Endothelial cell of umbilical vein (primary cell): ENCODE measurements at regions of chr22 and their contacts with region 1.

Region 1: DNA sequence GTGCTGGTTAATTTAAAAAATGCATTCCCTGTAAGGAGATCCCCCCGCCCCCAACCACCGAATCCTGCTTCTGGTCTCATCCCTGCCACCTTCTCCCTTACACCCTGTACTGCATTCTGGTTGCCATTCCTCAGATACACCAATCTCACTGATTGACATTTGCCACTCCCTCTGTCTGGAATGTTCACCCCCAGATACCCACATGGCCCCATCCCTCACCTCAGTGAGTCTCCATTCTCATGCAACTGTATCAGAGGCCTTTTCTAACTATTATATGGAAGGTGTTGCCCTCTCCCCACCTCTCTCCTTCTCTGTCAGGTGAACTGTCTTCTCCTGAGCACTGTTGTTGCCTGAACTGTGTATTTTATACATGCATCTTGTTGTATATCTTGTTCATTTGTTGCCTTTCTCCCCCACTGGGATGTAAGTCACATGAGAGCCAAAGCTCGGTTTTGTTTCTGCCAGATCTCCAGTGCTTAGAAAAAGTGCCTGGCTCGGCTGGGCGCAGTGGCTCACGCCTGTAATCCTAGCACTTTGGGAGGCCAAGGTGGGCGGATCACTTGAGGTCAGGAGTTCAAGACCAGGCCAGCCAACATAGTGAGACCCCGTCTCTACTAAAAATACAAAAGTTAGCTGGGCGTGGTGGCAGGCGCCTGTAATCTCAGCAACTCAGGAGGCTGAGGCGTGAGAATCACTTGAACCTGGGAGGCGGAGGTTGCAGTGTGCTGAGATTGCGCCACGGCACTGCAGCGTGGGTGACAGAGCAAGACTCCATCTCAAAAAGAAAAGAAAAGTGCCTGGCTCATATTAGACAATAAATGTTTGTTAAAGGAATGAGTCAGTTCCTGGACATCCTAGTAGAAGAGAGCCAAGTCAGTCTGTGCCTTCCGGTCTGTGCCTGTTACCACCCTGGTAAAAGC is 61.0 kb downstream of the TNRC6B start:
- DNase-seq: peak; percentile 74
- H3K4me3 ChIP-seq: no peak overlapping the region
- H3K27ac ChIP-seq: peak overlapping the region; percentile 44
- H3K4me1 ChIP-seq: peaks cover 27% of the 10 kb centered on the region
- H3K27me3 ChIP-seq: no peaks in the 10 kb centered on the region
- CTCF ChIP-seq: no peak
- POLR2A ChIP-seq: no peak

Region 2: GRCh38 chr22:40263191-40263590 is 24.5 kb after region 1 on chr22:
- CTCF ChIA-PET with region 1: interaction called, 4 read pairs
- POLR2A ChIA-PET with region 1: no interaction called
- dilution Hi-C with region 1: no loop called
- intact Hi-C with region 1: loop called (anchors 1 kb)
- DNase-seq: peak; percentile 80
- H3K4me3 ChIP-seq: no peak overlapping the region
- H3K27ac ChIP-seq: peak overlapping the region; percentile 23
- H3K4me1 ChIP-seq: peaks cover 41% of the 10 kb centered on the region
- H3K27me3 ChIP-seq: no peaks in the 10 kb centered on the region
- CTCF ChIP-seq: no peak
- POLR2A ChIP-seq: no peak

Region 3: GRCh38 chr22:40289991-40290459 is 51.3 kb after region 1 on chr22:
- CTCF ChIA-PET with region 1: no interaction called
- POLR2A ChIA-PET with region 1: no interaction called
- dilution Hi-C with region 1: no loop called
- intact Hi-C with region 1: no loop called
- DNase-seq: no peak
- H3K4me3 ChIP-seq: no peak overlapping the region
- H3K27ac ChIP-seq: no peak overlapping the region
- H3K4me1 ChIP-seq: no peaks in the 10 kb centered on the region
- H3K27me3 ChIP-seq: no peaks in the 10 kb centered on the region
- CTCF ChIP-seq: no peak
- POLR2A ChIP-seq: no peak